Activated CD4-positive, alpha-beta T cell treated with anti-CD3 and anti-CD28 coated beads, Interleukin-2, amount 10 ng/mL, durations not matched to agents 24 days and 14 days (primary cell): ENCODE measurements at regions of chr6 and their contacts with region 1.

Region 1: GRCh38 chr6:105920071-105920470 is 166.1 kb upstream of the PRDM1 start:
- DNase-seq: no peak
- H3K4me3 Mint-ChIP-seq: no peak overlapping the region
- H3K27ac Mint-ChIP-seq: no peak overlapping the region
- H3K4me1 Mint-ChIP-seq: peaks cover 15% of the 10 kb centered on the region
- H3K27me3 Mint-ChIP-seq: no peaks in the 10 kb centered on the region

Region 2: DNA sequence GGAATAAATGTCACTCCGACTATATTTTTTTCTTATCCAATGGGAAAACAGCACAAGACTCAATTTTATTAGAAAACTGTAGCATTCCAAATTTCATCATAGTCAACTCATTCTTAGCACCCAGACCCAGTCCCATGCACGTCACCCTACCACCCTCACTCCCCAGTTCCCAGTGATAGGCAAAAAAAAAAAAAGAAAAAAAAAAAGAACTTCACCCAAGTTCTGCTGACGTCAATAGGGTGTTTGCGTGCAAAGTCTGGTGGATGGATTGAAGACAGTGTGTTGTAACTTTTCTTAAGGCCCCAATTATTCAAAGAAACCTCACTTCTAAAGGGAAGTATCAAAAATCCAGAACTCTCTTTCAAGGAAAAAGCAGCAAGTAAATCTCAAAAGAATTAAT is 47.8 kb before region 1 on chr6:
- intact Hi-C with region 1: loop called (anchors 1 kb)
- DNase-seq: no peak
- H3K4me3 Mint-ChIP-seq: no peak overlapping the region
- H3K27ac Mint-ChIP-seq: no peak overlapping the region
- H3K4me1 Mint-ChIP-seq: peaks cover 12% of the 10 kb centered on the region
- H3K27me3 Mint-ChIP-seq: peaks cover 6% of the 10 kb centered on the region